ENCODE measurements at regions of chr9 and their contacts with region 1.

Region 1: DNA sequence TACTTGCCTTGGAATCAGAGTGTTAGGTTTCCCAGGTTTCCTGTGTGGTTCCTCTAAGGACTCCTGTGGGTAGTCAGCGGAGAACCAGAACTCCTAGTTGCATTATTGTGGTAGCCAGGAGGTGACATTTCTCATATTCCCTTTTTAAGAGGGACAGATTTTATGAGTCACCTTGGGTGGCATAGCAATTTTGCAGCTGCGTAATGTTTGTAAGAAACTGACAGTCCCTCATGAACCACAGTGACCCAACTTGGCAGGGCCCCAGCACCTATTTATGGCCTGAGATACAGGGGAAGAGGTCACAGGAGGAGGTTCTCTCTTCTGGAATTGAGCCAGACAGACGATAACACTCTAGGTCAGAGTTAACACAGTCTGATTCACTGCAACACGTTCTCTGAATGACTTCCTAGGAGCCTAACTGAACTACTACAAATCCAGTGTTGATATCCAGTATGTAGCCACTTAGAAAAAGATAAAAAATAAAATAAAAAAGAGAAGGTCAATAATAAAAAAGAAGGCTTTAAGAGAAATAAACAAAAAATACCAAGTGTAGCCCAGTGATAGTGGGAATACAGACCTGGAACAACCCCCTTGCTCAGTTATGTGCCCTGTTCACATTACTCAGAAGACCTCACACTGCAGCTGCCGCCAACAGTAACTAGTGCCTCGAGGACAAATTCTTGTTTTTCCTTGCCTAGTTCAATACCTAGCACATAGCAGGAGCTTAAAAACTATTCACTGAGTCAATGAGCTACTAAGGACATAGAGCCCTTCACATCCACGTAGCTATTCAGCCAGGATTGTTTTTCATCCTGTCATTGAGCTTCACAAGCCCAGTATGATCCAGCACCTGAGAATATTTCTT is 50.7 kb upstream of the VLDLR start:
- DNase-seq: peak; percentile 93 to 98
- ATAC-seq: peak; percentile 89 to 94 (median 90)
- H3K4me3 ChIP-seq: peak overlapping the region; percentile 24
- H3K27ac ChIP-seq: peak overlapping the region; percentile 83
- H3K4me1 ChIP-seq: peaks cover 28% of the 10 kb centered on the region
- H3K27me3 ChIP-seq: no peaks in the 10 kb centered on the region
- CTCF ChIP-seq: no peak

Region 2: DNA sequence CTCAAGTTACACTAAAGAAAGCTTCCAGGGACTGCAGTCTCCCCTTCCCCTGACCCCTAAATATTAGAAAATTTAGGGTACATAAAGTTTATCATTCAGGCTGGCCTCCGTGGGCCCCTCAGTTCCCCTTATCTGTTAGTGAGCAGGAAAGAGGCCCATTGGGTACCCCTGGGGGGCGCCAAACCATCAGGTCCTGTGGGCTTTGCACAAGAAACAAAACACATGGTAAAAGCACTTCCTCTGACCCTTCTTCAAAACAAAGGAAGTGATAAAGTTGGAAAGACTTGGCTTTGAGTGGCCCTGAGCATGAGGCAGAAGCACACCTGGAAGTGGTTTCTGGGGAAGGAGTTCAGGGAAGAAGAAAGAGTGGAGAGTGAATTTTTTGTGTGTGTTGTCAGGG is 342.7 kb before region 1 on chr9:
- intact Hi-C with region 1: no loop called
- DNase-seq: peak in 1 of 2 donors; percentile 54
- ATAC-seq: peak in 3 of 4 donors; percentile 54 to 73 (median 65)
- H3K4me3 ChIP-seq: no peak overlapping the region
- H3K27ac ChIP-seq: no peak overlapping the region
- H3K4me1 ChIP-seq: peaks cover 5% of the 10 kb centered on the region
- H3K27me3 ChIP-seq: no peaks in the 10 kb centered on the region
- CTCF ChIP-seq: peak; percentile 46

Region 3: GRCh38 chr9:2608276-2608675 is 37.4 kb after region 1 on chr9:
- intact Hi-C with region 1: loop called in 1 of 2 experiments (anchors 5 kb)
- DNase-seq: no peak
- ATAC-seq: no peak
- H3K4me3 ChIP-seq: no peak overlapping the region
- H3K27ac ChIP-seq: no peak overlapping the region
- H3K4me1 ChIP-seq: peaks cover 4% of the 10 kb centered on the region
- H3K27me3 ChIP-seq: no peaks in the 10 kb centered on the region
- CTCF ChIP-seq: no peak